IMR-90 (cell line): ENCODE measurements at regions of chr5 and their contacts with region 1.

Region 1: GRCh38 chr5:37234288-37234687 is 14.9 kb downstream of the CPLANE1 start:
- DNase-seq: no peak
- ATAC-seq: no peak
- H3K4me3 ChIP-seq: no peak overlapping the region
- H3K27ac ChIP-seq: no peak overlapping the region
- H3K4me1 ChIP-seq: no peaks in the 10 kb centered on the region
- H3K27me3 ChIP-seq: no peaks in the 10 kb centered on the region
- CTCF ChIP-seq: no peak
- POLR2A ChIP-seq: no peak
- RAD21 ChIP-seq: no peak

Region 2: GRCh38 chr5:37184748-37185364 is 49.4 kb before region 1 on chr5:
- CTCF ChIA-PET with region 1: no interaction called
- POLR2A ChIA-PET with region 1: interaction called, 14 read pairs
- dilution Hi-C with region 1: no loop called
- in situ Hi-C with region 1: no loop called
- intact Hi-C with region 1: no loop called
- DNase-seq: no peak
- ATAC-seq: no peak
- H3K4me3 ChIP-seq: no peak overlapping the region
- H3K27ac ChIP-seq: no peak overlapping the region
- H3K4me1 ChIP-seq: no peaks in the 10 kb centered on the region; the same call in 1 of the 2 replicates
- H3K27me3 ChIP-seq: no peaks in the 10 kb centered on the region
- CTCF ChIP-seq: no peak
- POLR2A ChIP-seq: no peak
- RAD21 ChIP-seq: no peak